Right ventricle myocardium superior (tissue), 1 donor: ENCODE measurements at regions of chr11 and their contacts with region 1.

Region 1: DNA sequence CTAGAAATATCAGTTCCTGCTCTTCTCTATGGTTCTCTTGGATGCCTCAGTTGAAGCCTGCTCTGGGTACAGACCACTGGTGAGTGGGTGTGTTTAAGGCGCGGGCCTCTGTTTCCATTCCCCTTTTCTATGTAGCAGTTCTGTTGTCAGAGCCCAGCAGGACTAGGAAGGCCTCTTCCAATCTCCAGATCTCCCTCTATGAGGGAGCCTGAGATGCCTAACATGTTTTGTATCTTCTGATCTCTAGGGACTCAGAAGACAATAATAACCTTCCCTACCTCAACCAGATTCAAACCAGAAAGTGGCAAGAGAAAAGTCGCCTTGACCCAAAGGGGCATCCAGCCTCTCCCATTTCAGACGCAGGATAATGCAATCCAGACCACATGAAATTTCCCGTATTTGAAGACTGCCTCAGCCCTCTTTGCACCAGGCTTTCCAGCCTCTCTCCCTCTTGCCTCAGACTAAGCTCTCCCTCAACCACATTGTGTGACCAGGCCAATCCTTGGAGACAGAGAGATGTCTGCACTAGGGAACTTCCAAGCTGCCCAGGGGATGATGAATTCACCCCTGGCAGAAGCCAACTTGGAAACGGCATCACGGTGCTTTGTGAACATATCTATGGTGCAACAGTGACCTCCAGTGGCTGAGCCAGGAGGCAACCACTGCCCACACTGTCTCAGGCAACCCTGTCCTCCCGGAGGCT is 150.1 kb upstream of the UBASH3B start:
- DNase-seq: peak; percentile 84
- ATAC-seq: peak; percentile 99

Region 2: GRCh38 chr11:121655537-121656327 is 849.7 kb before region 1 on chr11:
- intact Hi-C with region 1: loop called (anchors 5 kb)
- DNase-seq: peak; percentile 92
- ATAC-seq: peak; percentile 98

Region 3: GRCh38 chr11:122108192-122108799 is 397.2 kb before region 1 on chr11:
- intact Hi-C with region 1: loop called (anchors 10 kb)
- DNase-seq: no peak
- ATAC-seq: no peak

Region 4: DNA sequence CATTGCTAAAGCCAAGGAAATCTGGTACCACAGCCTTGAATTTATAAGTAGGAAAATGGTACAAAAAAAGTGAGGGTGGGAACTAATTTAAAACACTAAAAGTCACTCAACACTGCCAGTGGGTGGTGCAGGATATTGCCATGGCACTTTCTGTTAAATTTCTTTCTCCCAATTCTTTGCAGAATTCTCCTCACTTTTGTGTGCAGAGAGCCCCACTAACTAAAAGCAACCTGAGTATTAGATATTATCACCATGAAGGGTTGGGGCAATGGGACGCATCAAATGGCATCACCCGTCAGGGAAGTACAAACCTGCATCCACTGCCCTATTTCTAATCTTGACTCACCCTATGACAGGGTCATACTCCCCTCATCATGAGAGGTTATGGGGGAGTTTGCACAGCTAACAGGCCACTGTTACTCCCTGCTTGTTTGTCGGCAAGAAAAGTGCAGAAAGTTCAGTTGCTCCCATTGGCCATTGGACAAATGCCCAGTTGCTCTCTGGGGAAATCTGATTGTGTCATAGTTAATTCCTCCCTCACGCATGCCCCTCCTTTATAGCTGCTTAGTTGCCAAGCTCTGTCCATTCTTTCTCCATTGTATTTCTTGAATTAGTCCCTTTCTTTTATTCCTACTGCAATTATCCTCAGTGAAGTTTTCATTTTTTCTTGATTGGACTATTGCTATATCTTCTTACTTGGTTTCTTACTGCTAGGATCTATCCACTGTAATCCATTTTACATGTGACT is 295.7 kb before region 1 on chr11:
- intact Hi-C with region 1: loop called (anchors 5 kb)
- DNase-seq: no peak
- ATAC-seq: peak; percentile 70

Region 5: DNA sequence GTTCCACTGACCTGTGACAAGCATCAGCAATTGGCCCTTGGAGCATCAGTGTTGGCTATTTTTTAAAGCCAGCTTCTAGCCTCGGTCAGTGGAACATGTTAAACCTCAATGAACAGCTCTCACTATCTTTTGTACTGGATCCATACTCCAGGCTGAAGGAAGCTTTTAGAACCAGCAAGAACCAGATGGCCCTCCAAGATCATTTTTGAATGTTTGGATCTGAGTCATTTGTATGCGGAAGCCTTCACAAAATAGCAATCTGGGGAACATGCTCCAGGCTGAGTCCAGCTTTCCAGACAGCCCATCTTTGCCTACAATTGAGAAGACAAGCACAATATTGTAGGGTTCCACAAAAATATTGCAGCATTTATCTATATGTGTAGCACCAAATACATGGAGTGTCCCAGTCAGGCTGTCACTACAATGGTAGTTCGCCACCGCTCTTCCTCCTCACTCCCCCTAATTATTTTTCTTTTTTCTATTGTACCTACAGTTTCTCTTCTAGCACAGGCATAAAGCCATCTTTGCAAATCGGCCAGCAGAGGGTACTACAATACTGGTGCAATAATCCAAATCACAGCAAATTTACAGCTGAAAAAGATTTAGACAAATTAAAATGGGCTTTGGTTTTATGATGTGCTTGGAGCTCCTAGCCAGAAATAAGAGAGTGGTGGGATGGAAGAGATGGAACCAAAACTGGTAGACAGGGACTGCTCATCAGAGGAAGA is 212.0 kb before region 1 on chr11:
- intact Hi-C with region 1: loop called (anchors 5 kb)
- DNase-seq: no peak
- ATAC-seq: peak; percentile 51

Region 6: GRCh38 chr11:122367809-122368231 is 137.6 kb before region 1 on chr11:
- intact Hi-C with region 1: loop called (anchors 10 kb)
- DNase-seq: no peak
- ATAC-seq: peak; percentile 74

Region 7: GRCh38 chr11:122556605-122557004 is 51.1 kb after region 1 on chr11:
- intact Hi-C with region 1: no loop called
- DNase-seq: no peak
- ATAC-seq: no peak